ENCODE measurements at regions of chr1 and their contacts with region 1.

Region 1: GRCh38 chr1:209565759-209566678 is 17.5 kb upstream of the CAMK1G start:
- DNase-seq: peak; percentile 93
- ATAC-seq: peak; percentile 94
- H3K4me3 Mint-ChIP-seq: no peak overlapping the region
- H3K27ac Mint-ChIP-seq: no peak overlapping the region
- H3K4me1 Mint-ChIP-seq: peaks cover 32% of the 10 kb centered on the region
- H3K27me3 Mint-ChIP-seq: peaks cover 15% of the 10 kb centered on the region
- CTCF ChIP-seq: peak; percentile 65

Region 2: DNA sequence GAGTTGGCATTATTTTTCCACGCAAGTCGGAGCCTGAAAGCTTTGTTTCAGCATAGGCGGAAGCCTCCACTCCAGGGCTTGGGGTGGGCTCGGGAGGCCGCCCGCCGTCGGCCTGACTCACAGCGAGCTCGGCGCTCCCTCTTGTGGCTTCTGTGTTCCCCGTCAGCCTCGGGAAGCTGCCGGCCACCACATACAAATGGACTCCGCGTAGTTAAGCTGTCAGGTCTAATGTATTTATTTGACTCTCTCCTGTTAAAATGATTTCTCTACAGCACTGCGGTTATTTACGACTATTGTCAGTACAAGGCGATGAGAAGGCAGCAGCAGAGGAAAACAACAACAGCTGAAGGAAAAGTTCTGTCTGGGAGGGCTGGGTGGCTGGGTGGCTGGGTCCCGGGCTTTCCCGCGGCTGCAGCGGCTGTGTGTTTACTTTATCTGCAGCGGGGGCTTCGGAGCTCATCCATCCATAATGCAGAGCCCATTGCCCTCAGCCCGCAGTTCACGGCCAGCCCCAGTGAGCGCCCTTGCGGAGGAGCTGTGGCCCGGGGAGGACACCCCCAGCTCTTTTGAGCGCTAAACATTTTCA is 358.2 kb before region 1 on chr1:
- CTCF ChIA-PET with region 1: interaction called, 17 read pairs
- POLR2A ChIA-PET with region 1: no interaction called
- DNase-seq: peak; percentile 83
- ATAC-seq: peak; percentile 91
- H3K4me3 Mint-ChIP-seq: peak overlapping the region; percentile 65
- H3K27ac Mint-ChIP-seq: no peak overlapping the region
- H3K4me1 Mint-ChIP-seq: peaks cover 24% of the 10 kb centered on the region
- H3K27me3 Mint-ChIP-seq: peaks cover 9% of the 10 kb centered on the region
- CTCF ChIP-seq: peak; percentile 50; the same call in 1 of the 2 replicates

Region 3: DNA sequence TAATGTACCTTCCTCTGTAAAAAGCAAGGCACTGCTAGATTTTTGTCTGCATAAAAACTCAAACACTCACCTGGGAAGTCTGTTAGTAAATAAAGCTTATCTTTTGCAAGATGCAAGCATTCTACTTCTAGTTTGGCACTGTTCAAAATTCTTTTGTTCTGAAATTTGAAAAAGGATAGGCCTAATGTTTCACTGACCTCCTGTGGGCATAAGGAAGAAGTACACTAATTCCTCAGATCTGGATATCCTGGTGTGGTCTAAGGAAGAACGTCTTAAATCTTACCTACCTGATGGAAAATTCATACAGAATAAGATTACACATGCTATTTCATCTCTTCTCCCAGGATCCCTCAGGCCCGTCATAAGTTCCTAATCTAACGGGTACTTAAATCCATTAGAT is 76.0 kb before region 1 on chr1:
- CTCF ChIA-PET with region 1: interaction called, 22 read pairs
- POLR2A ChIA-PET with region 1: no interaction called
- DNase-seq: no peak
- ATAC-seq: peak; percentile 73; the same call in 1 of the 2 replicates
- H3K4me3 Mint-ChIP-seq: no peak overlapping the region
- H3K27ac Mint-ChIP-seq: no peak overlapping the region
- H3K4me1 Mint-ChIP-seq: peaks cover 28% of the 10 kb centered on the region
- H3K27me3 Mint-ChIP-seq: no peaks in the 10 kb centered on the region; the same call in 1 of the 2 replicates
- CTCF ChIP-seq: peak; percentile 41; the same call in 1 of the 2 replicates

Region 4: DNA sequence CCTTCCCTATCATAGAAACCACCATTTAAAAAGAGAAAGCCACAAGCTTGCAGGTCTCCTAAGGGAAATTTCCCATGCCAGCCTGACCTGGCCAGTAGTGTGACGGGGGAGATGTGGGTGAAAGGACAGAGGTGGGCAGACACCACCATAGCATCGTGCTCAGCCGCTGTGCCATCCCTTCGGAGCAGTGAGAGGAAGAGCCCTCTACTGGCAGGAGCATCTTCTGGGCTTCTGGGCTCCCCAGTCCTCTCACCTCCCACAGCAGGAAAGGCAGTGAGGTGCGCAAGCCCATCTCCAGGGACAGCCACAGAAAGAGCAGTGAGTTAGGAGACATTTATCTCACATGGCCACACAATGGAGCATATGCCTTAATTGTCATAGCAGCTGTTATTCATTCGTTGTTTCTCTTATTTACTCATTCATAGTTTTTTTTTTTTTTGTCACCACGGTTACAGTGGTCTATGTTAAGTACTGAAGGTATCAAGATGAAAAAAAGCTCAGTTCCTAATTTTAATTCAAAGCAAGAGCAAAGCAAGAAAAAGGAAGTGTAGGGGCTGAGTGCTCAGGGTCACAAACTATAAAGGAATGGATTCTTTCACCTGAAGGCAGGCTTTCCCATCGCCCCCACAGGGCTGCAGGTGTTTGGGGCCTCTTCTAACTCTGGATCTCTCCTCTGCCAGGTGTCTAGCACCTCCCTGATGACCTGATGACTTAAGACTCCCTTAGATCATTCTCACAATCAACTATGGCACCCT is 31.3 kb before region 1 on chr1:
- CTCF ChIA-PET with region 1: interaction called, 10 read pairs
- POLR2A ChIA-PET with region 1: no interaction called
- DNase-seq: no peak
- ATAC-seq: peak; percentile 78
- H3K4me3 Mint-ChIP-seq: no peak overlapping the region
- H3K27ac Mint-ChIP-seq: no peak overlapping the region
- H3K4me1 Mint-ChIP-seq: peaks cover 23% of the 10 kb centered on the region
- H3K27me3 Mint-ChIP-seq: peaks cover 35% of the 10 kb centered on the region
- CTCF ChIP-seq: no peak

Region 5: GRCh38 chr1:209576798-209577197 is 10.8 kb after region 1 on chr1:
- CTCF ChIA-PET with region 1: interaction called, 42 read pairs
- POLR2A ChIA-PET with region 1: no interaction called
- DNase-seq: peak; percentile 90
- ATAC-seq: peak; percentile 98
- H3K4me3 Mint-ChIP-seq: no peak overlapping the region
- H3K27ac Mint-ChIP-seq: no peak overlapping the region
- H3K4me1 Mint-ChIP-seq: peaks cover 10% of the 10 kb centered on the region
- H3K27me3 Mint-ChIP-seq: peaks cover 2% of the 10 kb centered on the region; the same call in 1 of the 2 replicates
- CTCF ChIP-seq: peak; percentile 93

Region 6: DNA sequence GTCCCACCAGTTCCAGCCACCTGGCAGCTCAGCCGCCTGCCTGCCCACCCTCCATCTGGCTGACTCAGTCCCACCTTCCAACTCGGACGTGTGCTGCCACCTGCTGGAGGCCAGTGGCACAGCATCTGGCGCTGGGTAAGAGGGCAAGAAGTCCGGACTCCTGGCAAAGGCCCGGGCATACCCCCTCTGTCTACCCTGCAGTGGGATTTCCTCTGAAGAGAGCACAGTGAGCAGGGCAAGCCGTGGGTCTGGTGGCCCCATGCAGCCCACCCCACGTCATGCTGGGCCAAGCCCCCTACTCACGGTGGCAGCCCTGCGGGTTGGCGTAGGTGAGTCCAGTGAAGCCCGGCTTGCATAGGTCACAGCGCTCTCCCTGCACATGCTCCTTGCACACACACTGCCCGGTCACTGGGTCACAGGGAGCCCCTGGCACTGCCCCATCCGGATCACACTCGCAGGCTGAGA is 61.7 kb after region 1 on chr1:
- CTCF ChIA-PET with region 1: interaction called, 53 read pairs
- POLR2A ChIA-PET with region 1: no interaction called
- DNase-seq: peak; percentile 95
- ATAC-seq: peak; percentile 83
- H3K4me3 Mint-ChIP-seq: no peak overlapping the region
- H3K27ac Mint-ChIP-seq: no peak overlapping the region
- H3K4me1 Mint-ChIP-seq: peaks cover 43% of the 10 kb centered on the region
- H3K27me3 Mint-ChIP-seq: peaks cover 3% of the 10 kb centered on the region; the same call in 1 of the 2 replicates
- CTCF ChIP-seq: peak; percentile 98

Region 7: DNA sequence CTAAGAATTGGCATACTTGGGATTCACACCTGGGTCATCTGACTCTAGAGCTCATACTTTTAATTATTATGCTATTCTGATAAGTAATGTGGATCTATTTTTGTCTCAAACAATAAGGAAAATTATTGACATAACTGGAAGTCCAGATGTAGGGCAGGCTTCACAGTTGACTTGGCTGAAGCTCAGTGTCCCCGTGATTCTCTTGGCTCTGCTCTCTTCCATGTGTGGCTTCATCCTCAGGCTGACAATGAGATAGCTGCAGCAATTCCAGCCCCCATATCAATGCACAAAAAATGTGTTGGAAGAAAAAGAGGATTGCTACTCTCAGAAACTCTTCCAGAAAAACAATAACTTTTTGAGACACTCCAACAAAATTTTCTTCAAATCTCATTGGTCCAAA is 162.4 kb after region 1 on chr1:
- CTCF ChIA-PET with region 1: no interaction called
- POLR2A ChIA-PET with region 1: no interaction called
- DNase-seq: no peak
- ATAC-seq: no peak
- H3K4me3 Mint-ChIP-seq: no peak overlapping the region
- H3K27ac Mint-ChIP-seq: no peak overlapping the region
- H3K4me1 Mint-ChIP-seq: no peaks in the 10 kb centered on the region
- H3K27me3 Mint-ChIP-seq: peaks cover 13% of the 10 kb centered on the region
- CTCF ChIP-seq: no peak

Region 8: GRCh38 chr1:209747580-209748262 is 181.7 kb after region 1 on chr1:
- CTCF ChIA-PET with region 1: interaction called, 12 read pairs
- POLR2A ChIA-PET with region 1: no interaction called
- DNase-seq: peak; percentile 99
- ATAC-seq: peak; percentile 99
- H3K4me3 Mint-ChIP-seq: peak overlapping the region; percentile 51
- H3K27ac Mint-ChIP-seq: no peak overlapping the region
- H3K4me1 Mint-ChIP-seq: peaks cover 10% of the 10 kb centered on the region
- H3K27me3 Mint-ChIP-seq: peaks cover 23% of the 10 kb centered on the region
- CTCF ChIP-seq: peak; percentile 96

Measured in WTC11 (cell line).